ENCODE measurements at regions of chr10 and their contacts with region 1.

Region 1: DNA sequence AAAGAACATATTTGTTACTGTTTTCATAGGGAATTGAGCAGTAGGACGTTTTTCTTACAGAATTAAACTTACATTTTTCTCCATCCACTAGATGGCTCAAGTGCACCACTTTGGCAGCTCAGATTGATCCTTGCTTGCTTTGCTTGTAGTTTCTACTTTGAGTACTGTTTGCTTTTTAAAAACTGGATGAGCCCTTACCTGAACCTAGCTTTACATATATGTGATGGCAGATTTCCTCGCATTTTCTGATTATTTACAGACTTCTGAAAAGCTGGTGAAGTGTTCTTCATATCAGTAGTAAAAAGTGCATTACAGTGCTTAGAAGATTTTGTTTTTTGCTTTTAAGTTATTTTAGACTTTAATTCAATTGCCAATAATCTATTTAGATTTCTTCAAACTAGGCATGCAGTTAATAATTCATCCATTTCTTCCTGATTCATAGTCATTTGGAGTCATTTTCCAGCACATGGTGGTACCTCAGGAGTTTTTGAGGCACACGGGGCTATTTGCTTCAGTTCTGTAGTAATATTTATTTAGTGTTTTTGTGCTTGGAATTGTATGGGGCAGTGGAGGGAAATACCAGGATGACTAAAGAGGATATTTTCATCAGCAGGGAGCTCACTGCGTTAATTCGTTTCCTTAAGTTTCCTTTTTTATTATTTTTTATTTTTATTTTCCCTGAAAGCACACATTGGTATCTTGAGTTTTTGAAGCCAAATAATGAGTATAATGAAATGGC is 57.3 kb downstream of the MAPK8 start:
- DNase-seq: peak; percentile 57 to 77
- H3K4me3 ChIP-seq: no peak overlapping the region
- H3K4me3 Mint-ChIP-seq: peak overlapping the region; percentile 27
- H3K27ac Mint-ChIP-seq: peak overlapping the region; percentile 30
- H3K4me1 ChIP-seq: peaks cover 38% of the 10 kb centered on the region
- H3K4me1 Mint-ChIP-seq: peaks cover 26% of the 10 kb centered on the region
- H3K27me3 ChIP-seq: no peaks in the 10 kb centered on the region
- H3K27me3 Mint-ChIP-seq: no peaks in the 10 kb centered on the region
- CTCF ChIP-seq: peak; percentile 86 to 94

Region 2: DNA sequence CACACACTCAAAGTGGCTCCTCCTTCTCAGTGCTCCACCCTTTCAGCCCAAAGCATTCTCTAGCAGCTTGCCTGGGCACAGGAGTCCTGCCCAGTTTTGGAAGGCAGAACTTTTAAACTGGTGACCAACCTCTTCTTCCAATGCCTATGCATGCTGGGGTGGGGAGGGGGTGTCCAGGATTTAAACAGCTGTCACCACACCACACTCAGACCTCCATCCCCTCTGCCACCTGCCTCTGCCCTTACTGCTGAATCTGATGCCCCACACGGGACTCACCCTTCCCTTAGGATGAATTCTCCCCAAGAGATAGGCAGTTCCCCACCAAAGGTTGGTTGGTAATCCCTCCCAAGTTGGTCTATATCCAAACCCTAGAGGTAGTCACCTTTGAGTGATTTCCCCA is 139.5 kb before region 1 on chr10:
- CTCF ChIA-PET with region 1: no interaction called
- POLR2A ChIA-PET with region 1: no interaction called
- intact Hi-C with region 1: no loop called
- DNase-seq: no peak
- H3K4me3 ChIP-seq: no peak overlapping the region
- H3K4me3 Mint-ChIP-seq: no peak overlapping the region
- H3K27ac Mint-ChIP-seq: no peak overlapping the region
- H3K4me1 ChIP-seq: no peaks in the 10 kb centered on the region
- H3K4me1 Mint-ChIP-seq: no peaks in the 10 kb centered on the region
- H3K27me3 ChIP-seq: no peaks in the 10 kb centered on the region; the same call in none of the 2 replicates
- H3K27me3 Mint-ChIP-seq: peaks cover 29% of the 10 kb centered on the region
- CTCF ChIP-seq: no peak

Region 3: DNA sequence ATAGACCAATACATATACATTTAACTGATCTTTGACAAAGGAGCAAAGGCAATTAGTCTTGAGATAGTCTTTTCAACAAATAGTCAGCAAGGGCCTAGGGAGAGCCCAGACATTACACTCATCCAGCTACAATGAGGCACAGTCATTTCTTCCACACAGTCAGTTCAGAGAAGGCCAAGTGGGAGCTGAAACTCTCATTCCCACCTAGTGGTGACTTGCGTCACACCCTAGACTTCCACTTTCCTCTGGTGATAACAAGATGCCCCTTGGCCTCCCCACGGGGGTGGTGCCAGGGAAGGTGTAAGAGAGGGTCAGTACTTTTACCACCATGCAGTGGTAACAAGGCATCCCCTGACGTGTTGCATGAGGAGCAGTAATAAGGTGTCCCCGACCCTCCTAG is 97.3 kb before region 1 on chr10:
- CTCF ChIA-PET with region 1: no interaction called
- POLR2A ChIA-PET with region 1: no interaction called
- intact Hi-C with region 1: no loop called
- DNase-seq: no peak
- H3K4me3 ChIP-seq: no peak overlapping the region
- H3K4me3 Mint-ChIP-seq: no peak overlapping the region
- H3K27ac Mint-ChIP-seq: no peak overlapping the region
- H3K4me1 ChIP-seq: no peaks in the 10 kb centered on the region
- H3K4me1 Mint-ChIP-seq: no peaks in the 10 kb centered on the region
- H3K27me3 ChIP-seq: no peaks in the 10 kb centered on the region
- H3K27me3 Mint-ChIP-seq: peaks cover 23% of the 10 kb centered on the region
- CTCF ChIP-seq: peak; percentile 8 to 29

Region 4: DNA sequence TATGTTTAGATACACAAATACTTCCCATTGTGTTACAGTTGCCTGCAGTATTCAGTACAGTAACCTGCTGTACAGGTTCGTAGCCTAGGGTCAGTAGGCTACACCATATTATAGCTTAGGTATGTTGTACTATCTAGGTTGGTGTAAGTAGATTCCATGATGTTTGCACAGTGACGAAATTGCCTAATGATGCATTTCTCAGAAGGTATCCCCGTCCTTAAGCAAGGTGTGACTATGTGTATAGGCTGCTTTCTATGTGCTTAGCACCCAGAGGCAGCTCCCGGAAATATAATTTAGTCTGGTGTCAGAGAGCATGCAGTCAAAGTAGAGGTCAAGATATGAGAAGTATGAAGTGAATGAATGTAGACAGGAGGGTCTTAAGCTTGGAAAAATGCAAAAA is 47.5 kb before region 1 on chr10:
- CTCF ChIA-PET with region 1: no interaction called
- POLR2A ChIA-PET with region 1: no interaction called
- intact Hi-C with region 1: no loop called
- DNase-seq: peak; percentile 51 to 56
- H3K4me3 ChIP-seq: no peak overlapping the region
- H3K4me3 Mint-ChIP-seq: no peak overlapping the region
- H3K27ac Mint-ChIP-seq: no peak overlapping the region
- H3K4me1 ChIP-seq: peaks cover 11% of the 10 kb centered on the region
- H3K4me1 Mint-ChIP-seq: no peaks in the 10 kb centered on the region
- H3K27me3 ChIP-seq: no peaks in the 10 kb centered on the region
- H3K27me3 Mint-ChIP-seq: no peaks in the 10 kb centered on the region
- CTCF ChIP-seq: no peak

Region 5: DNA sequence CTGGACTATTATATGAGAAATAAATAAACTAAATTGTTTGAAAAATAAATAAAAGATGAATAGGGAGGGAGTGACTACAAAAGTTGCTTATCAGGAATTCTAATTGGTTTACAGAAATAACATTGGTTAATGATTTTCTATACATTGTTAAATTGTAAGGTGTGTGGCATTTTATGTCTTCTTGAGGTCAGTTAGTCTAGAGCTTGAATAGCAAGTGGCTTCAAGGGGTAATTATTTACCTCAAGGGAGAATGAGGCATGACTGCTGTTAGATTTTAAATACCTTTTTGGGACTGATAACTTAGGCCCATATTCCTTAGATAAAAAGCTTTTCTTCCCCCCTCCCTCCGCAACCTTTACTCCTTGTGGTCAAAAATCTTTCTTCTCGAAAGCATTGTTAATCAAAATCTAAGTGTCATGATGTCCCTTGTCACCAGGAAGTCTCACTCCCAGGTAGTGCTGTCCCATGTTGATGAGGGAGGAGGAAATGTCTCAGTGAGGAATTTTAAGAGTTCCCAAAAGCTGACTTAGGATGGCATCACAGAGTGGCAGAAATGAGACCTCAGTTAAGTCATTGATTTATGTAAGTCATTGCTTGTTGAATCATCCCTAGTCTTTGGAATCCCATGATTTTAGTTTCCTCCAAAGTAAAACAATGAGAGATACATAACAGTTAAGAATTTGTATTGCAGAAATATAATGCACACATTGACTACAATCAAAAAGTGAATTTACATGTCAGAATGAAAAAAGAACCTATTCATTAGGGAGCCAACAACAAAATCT is 14.2 kb after region 1 on chr10:
- CTCF ChIA-PET with region 1: interaction called, 6 read pairs
- POLR2A ChIA-PET with region 1: no interaction called
- intact Hi-C with region 1: loop called (anchors 2 kb)
- DNase-seq: peak; percentile 56
- H3K4me3 ChIP-seq: no peak overlapping the region
- H3K4me3 Mint-ChIP-seq: peak overlapping the region; percentile 38
- H3K27ac Mint-ChIP-seq: peak overlapping the region; percentile 66
- H3K4me1 ChIP-seq: peaks cover 59% of the 10 kb centered on the region
- H3K4me1 Mint-ChIP-seq: peaks cover 48% of the 10 kb centered on the region
- H3K27me3 ChIP-seq: no peaks in the 10 kb centered on the region
- H3K27me3 Mint-ChIP-seq: no peaks in the 10 kb centered on the region
- CTCF ChIP-seq: no peak

Region 6: DNA sequence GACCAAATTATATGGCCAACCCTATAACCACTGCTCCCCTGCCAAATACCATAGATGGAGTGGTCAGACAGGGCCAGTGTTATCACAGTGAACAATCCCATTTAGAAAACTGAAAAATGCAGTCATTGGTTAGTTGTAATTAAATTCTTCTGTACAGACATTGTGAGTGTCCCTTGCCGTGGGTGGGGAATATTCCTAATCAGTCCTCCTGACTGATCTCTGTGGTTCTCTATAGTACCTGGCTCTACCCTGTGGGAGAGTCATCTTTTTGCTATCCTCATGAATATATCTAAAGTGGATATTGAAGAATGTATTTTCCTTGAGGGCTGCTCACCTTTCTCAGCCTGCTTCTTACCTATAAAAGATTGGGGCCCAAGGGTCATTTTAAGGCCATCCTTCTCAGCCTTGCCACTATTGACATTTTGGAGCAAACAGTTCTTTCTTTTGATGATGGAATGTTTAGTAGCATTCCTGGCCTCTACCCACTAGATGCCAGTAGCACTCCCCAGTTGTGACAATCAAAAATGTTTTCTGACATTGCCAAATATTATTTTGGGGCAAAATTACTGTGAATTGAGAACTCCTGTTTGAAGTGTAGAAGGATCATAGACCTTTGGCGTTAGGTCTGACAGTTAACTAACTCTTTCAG is 52.9 kb after region 1 on chr10:
- CTCF ChIA-PET with region 1: no interaction called
- POLR2A ChIA-PET with region 1: no interaction called
- intact Hi-C with region 1: loop called (anchors 1 kb)
- DNase-seq: peak; percentile 60 to 62
- H3K4me3 ChIP-seq: no peak overlapping the region
- H3K4me3 Mint-ChIP-seq: peak overlapping the region; percentile 42
- H3K27ac Mint-ChIP-seq: peak overlapping the region; percentile 29
- H3K4me1 ChIP-seq: peaks cover 34% of the 10 kb centered on the region
- H3K4me1 Mint-ChIP-seq: peaks cover 28% of the 10 kb centered on the region
- H3K27me3 ChIP-seq: no peaks in the 10 kb centered on the region
- H3K27me3 Mint-ChIP-seq: no peaks in the 10 kb centered on the region
- CTCF ChIP-seq: peak in 1 of 2 experiments; percentile 53

Region 7: GRCh38 chr10:48463318-48464003 is 99.7 kb after region 1 on chr10:
- CTCF ChIA-PET with region 1: interaction called, 8 read pairs
- POLR2A ChIA-PET with region 1: no interaction called
- intact Hi-C with region 1: loop called (anchors 1 kb)
- DNase-seq: peak; percentile 61
- H3K4me3 ChIP-seq: no peak overlapping the region
- H3K4me3 Mint-ChIP-seq: no peak overlapping the region
- H3K27ac Mint-ChIP-seq: peak overlapping the region; percentile 28
- H3K4me1 ChIP-seq: peaks cover 16% of the 10 kb centered on the region
- H3K4me1 Mint-ChIP-seq: peaks cover 28% of the 10 kb centered on the region
- H3K27me3 ChIP-seq: no peaks in the 10 kb centered on the region
- H3K27me3 Mint-ChIP-seq: no peaks in the 10 kb centered on the region
- CTCF ChIP-seq: peak in 1 of 2 experiments; percentile 47

Region 8: DNA sequence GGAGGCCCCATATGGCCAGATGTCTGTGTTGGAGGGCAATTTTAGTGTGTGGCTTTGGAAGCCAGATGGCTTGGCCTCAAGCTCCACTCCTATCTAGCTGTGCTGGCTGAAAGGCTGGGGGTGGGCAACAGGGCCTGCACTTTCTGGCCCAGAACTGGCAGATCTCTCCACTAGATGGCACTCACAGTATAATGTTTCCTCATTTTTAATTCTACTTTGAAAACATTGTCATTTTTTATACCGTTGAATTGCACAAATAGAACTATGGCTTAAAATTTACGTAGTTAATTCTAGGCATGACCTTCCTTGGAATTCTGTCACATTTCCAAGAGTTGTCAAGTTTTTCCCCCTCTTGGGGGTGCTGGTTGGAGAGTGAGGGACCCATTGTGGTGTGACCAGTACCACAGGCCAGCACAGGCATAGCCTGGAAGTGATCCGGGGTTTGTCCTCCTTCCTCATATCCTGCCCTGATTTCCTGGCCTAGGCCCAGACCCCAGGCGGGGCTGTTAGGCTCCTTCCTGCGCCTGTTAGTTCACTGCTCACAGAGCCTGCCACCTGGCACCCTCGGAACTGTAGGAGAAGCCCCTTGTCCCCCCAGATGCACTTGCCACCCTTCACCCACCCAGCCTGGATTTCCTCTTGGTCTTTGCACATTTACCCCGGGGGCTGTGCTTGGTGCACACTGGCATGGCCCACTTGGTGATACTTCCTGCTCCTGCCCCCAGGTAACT is 188.2 kb after region 1 on chr10:
- CTCF ChIA-PET with region 1: interaction called, 4 read pairs
- POLR2A ChIA-PET with region 1: no interaction called
- intact Hi-C with region 1: loop called (anchors 1 kb)
- DNase-seq: peak in 1 of 2 experiments; percentile 58
- H3K4me3 ChIP-seq: no peak overlapping the region
- H3K4me3 Mint-ChIP-seq: no peak overlapping the region
- H3K27ac Mint-ChIP-seq: no peak overlapping the region
- H3K4me1 ChIP-seq: no peaks in the 10 kb centered on the region
- H3K4me1 Mint-ChIP-seq: no peaks in the 10 kb centered on the region
- H3K27me3 ChIP-seq: no peaks in the 10 kb centered on the region
- H3K27me3 Mint-ChIP-seq: no peaks in the 10 kb centered on the region
- CTCF ChIP-seq: peak; percentile 84 to 86

Measured in Caco-2 (cell line).